AG04449 (cell line): ENCODE measurements at regions of chr7 and their contacts with region 1.

Region 1: GRCh38 chr7:120987683-120988590 is 574 bp upstream of the CPED1 start:
- DNase-seq: peak; percentile 77
- H3K4me3 ChIP-seq: peak overlapping the region; percentile 63
- CTCF ChIP-seq: peak; percentile 88

Region 2: GRCh38 chr7:120857588-120858573 is 130.1 kb before region 1 on chr7 and contains the start of gene TSPAN12:
- CTCF ChIA-PET with region 1: no interaction called
- POLR2A ChIA-PET with region 1: no interaction called
- DNase-seq: no peak
- H3K4me3 ChIP-seq: peak within 1 kb of the TSS; percentile 65
- CTCF ChIP-seq: peak; percentile 68

Region 3: DNA sequence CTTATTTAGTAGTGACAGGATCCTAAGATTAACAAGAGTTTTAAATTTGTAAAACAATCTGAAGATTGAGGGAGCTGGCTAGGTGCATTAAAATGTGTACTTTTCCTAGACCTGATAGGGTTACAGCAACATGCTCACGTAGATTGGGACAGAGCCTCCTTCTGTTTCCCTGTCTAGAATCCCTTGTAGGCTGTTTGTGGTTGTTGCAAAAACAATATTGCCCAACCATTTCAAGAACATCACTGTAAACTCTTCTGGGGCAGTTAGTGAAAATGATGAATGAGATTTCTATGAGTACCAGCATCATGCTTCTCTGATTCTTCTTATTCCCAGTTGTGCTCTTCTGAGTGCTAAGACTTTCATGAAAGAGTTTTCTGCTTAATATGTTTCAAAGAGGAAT is 14.1 kb before region 1 on chr7:
- CTCF ChIA-PET with region 1: interaction called, 33 read pairs
- POLR2A ChIA-PET with region 1: no interaction called
- DNase-seq: no peak
- H3K4me3 ChIP-seq: no peak overlapping the region
- CTCF ChIP-seq: no peak

Region 4: GRCh38 chr7:121016966-121017365 is 29.0 kb after region 1 on chr7:
- CTCF ChIA-PET with region 1: interaction called, 11 read pairs
- POLR2A ChIA-PET with region 1: no interaction called
- DNase-seq: peak; percentile 62
- H3K4me3 ChIP-seq: no peak overlapping the region
- CTCF ChIP-seq: no peak

Region 5: GRCh38 chr7:121057878-121058277 is 69.9 kb after region 1 on chr7:
- CTCF ChIA-PET with region 1: interaction called, 10 read pairs
- POLR2A ChIA-PET with region 1: no interaction called
- DNase-seq: no peak
- H3K4me3 ChIP-seq: no peak overlapping the region
- CTCF ChIP-seq: no peak

Region 6: GRCh38 chr7:121088870-121089269 is 100.9 kb after region 1 on chr7:
- CTCF ChIA-PET with region 1: interaction called, 219 read pairs
- POLR2A ChIA-PET with region 1: interaction called, 41 read pairs
- DNase-seq: no peak
- H3K4me3 ChIP-seq: no peak overlapping the region
- CTCF ChIP-seq: no peak

Region 7: DNA sequence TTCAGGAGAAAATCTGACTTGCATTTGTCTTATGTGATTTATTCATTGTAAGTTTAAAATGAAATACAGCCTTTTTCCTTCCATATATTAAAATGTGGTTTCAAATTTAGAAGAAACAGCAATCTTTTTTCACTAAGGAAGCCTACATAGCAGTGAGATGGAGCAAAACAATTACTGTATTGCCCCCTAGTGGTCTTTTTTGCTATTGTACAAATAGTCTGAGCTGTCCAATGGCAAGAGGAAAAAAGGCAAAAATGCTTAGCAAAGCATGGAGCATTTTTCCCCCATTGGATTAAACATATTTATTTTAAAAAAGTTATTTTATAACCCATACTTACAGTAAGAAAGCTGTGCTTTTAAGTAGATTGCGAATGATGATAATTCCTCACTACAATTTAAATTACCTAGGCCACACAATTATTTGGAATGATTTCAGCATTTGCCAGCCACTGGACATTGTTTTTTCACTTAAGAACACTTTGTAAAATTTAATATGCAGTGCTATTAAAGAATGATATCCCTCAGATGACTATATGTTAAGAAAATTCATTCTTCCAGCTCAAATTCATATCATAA is 120.1 kb after region 1 on chr7:
- CTCF ChIA-PET with region 1: interaction called, 132 read pairs
- POLR2A ChIA-PET with region 1: no interaction called
- DNase-seq: peak; percentile 19
- H3K4me3 ChIP-seq: no peak overlapping the region
- CTCF ChIP-seq: peak; percentile 43

Region 8: GRCh38 chr7:121337398-121337797 is 349.5 kb after region 1 on chr7:
- CTCF ChIA-PET with region 1: interaction called, 10 read pairs
- POLR2A ChIA-PET with region 1: no interaction called
- DNase-seq: no peak
- H3K4me3 ChIP-seq: no peak overlapping the region
- CTCF ChIP-seq: peak; percentile 28